H1 (cell line): ENCODE measurements at regions of chr20 and their contacts with region 1.

Region 1: DNA sequence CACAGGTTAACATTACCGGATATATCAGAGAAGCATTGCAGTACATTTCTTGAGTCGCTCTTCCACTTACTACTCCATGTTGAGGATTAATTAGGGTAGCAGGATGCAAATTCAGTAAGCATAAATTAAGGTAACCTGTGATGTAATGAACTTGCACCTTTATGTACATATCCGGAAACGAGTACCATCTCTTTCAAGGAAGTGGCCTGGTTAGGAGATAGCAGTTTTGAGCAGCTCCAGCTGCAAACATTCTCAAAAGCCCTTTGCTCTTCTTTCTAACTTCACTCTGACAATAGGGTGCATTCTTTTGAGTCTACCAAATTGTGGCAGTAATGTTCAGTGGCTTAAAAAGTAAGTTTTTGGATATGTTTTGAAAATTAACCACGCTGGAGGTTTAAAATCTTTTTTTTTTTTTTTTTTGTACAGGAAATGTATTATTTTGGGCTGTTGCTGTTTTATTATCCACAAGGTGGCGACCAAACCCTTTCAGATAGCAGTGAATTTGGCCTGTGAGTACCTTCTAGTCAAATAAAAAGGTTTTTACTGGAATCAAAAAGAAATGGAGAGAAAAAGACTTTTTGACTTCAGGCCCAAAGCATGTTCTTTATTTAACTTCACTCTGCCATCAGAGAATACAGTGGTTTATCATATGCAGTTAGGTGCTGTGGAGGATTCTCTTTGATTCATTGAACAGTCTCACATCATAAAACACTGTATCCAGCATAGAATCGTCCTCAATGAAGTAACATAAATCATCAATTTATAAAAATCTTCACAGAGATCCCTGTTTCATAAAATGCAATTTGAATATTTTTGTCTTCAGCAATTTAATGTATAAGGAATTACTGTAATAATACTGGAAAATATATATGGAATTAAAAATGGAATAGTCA is 8.9 kb downstream of the FAM217B start:
- DNase-seq: no peak
- H3K4me3 ChIP-seq: no peak overlapping the region
- H3K27ac ChIP-seq: no peak overlapping the region
- H3K4me1 ChIP-seq: peaks cover 0 to 2% (median 0%) of the 10 kb centered on the region in 4 experiments; a peak in 1 of 7 replicates
- H3K27me3 ChIP-seq: no peaks in the 10 kb centered on the region
- CTCF ChIP-seq: peak in 2 of 3 experiments; percentile 35 to 42; a peak in 2 of 4 replicates
- EP300 ChIP-seq: no peak
- POLR2A ChIP-seq: no peak
- RAD21 ChIP-seq: peak; percentile 68 to 71

Region 2: GRCh38 chr20:59933849-59934596 is 15.1 kb before region 1 on chr20:
- CTCF ChIA-PET with region 1: interaction called, 23 read pairs
- POLR2A ChIA-PET with region 1: interaction called, 8 read pairs
- DNase-seq: peak in 1 of 2 experiments; percentile 90
- H3K4me3 ChIP-seq: peak overlapping the region; percentile 27 to 63 (median 41)
- H3K27ac ChIP-seq: no peak overlapping the region
- H3K4me1 ChIP-seq: no peaks in the 10 kb centered on the region
- H3K27me3 ChIP-seq: peaks cover 5 to 31% (median 25%) of the 10 kb centered on the region in 4 experiments
- CTCF ChIP-seq: peak; percentile 67 to 82 (median 73)
- EP300 ChIP-seq: no peak
- POLR2A ChIP-seq: no peak
- RAD21 ChIP-seq: peak; percentile 30 to 46; a peak in 3 of 4 replicates

Region 3: DNA sequence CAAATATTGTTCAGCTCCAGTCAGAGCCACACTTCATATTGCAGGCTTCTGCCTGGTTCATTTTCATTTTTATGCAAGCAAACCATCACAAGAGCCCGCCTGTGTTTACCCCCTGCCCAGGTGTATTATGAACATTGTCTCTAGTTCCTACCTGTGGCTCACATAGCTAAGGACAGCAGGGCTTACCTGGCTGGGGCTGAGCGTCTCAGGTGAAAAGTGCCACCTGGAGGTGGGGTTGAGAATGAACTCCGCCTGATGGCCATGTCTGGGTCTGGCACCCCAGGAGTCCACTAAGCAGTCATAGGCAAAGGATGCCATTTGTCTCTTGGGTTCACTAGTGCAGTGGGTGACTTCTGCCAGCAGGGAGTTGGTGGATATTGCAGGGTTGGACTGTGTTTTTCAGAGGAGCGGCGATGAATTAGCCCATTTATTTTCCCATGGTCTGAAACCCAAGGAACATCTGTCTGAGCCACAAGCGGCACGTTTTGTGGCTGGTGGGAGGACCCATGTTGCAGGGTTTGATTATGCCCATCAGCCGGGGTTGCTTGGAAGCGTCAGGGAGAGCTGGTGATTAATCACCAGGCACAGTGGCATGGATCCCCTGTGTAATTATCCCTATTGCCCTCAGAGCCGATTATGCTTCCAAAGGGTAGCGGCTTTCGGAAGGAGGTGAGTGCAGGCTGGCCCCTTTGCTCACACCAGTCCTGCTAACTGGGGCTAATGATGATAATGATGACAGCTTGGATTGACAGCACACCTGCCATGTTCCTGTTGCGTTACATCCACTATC is 101.3 kb after region 1 on chr20:
- CTCF ChIA-PET with region 1: interaction called, 14 read pairs
- POLR2A ChIA-PET with region 1: interaction called, 3 read pairs
- DNase-seq: peak; percentile 38 to 68
- H3K4me3 ChIP-seq: no peak overlapping the region
- H3K27ac ChIP-seq: no peak overlapping the region
- H3K4me1 ChIP-seq: no peaks in the 10 kb centered on the region
- H3K27me3 ChIP-seq: no peaks in the 10 kb centered on the region; a peak in 1 of 7 replicates
- CTCF ChIP-seq: peak; percentile 74 to 92 (median 79)
- EP300 ChIP-seq: no peak
- POLR2A ChIP-seq: no peak
- RAD21 ChIP-seq: peak; percentile 63 to 80